Activated CD8-positive, alpha-beta T cell treated with anti-CD3 and anti-CD28 coated beads for 36 hours (primary cell): ENCODE measurements at regions of chr21 and their contacts with region 1.

Region 1: DNA sequence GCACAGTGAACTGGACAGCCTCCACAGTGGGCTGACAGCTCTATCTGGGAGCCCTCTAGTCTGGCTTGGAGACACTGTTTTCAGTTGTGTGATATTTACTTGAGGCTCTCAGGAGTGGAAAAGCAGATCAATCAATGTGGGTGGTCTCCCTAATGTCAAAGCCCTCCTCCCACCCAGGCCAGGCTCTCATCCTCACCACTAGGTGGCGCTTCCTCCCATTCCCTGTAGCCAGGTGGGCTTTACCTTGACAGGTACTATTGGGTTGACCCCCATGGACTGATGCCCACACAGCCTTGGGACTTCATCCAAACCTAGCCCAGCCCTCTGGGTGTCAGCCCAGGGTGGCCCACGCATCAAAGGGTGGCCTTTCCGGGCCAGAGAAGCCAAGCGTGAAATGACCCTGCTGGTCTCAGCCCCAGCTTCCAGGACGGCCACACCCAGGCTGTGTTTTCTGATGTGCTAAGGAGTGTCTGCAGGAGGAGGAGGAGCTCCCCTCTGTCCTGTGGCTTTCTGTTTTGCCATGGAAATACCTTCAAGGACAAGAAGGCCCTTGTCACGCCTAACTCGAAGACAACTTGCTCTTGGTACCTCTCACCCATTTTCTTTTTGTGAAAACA is 54.0 kb downstream of the CLIC6 start:
- DNase-seq: peak; percentile 53
- ATAC-seq: peak; percentile 39
- H3K4me3 Mint-ChIP-seq: no peak overlapping the region
- H3K27ac Mint-ChIP-seq: no peak overlapping the region
- H3K4me1 Mint-ChIP-seq: peaks cover 2% of the 10 kb centered on the region
- H3K27me3 Mint-ChIP-seq: peaks cover 6% of the 10 kb centered on the region
- CTCF ChIP-seq: peak; percentile 93

Region 2: DNA sequence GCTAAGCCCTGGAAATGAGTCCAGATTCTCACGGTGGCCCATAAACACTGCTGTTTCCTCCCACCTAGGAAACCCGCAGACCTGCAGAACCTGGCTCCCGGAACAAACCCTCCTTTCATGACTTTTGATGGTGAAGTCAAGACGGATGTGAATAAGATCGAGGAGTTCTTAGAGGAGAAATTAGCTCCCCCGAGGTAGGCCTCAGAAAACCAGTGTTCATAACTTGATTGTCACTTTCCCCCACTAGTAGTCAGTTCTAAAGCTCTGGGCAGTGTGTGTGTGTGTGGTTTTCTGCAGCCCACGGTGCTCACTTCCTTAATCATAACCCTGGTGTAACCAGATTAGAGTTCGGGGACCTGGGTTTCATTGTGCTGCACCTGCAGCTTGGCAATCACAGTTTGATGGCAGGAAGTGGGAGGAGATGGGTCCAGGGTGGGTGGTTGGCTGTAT is 14.9 kb before region 1 on chr21:
- CTCF ChIA-PET with region 1: interaction called, 33 read pairs
- POLR2A ChIA-PET with region 1: no interaction called
- intact Hi-C with region 1: no loop called
- DNase-seq: peak; percentile 85
- ATAC-seq: peak; percentile 98
- H3K4me3 Mint-ChIP-seq: no peak overlapping the region
- H3K27ac Mint-ChIP-seq: peak overlapping the region; percentile 63
- H3K4me1 Mint-ChIP-seq: peaks cover 26% of the 10 kb centered on the region
- H3K27me3 Mint-ChIP-seq: peaks cover 5% of the 10 kb centered on the region
- CTCF ChIP-seq: no peak

Region 3: DNA sequence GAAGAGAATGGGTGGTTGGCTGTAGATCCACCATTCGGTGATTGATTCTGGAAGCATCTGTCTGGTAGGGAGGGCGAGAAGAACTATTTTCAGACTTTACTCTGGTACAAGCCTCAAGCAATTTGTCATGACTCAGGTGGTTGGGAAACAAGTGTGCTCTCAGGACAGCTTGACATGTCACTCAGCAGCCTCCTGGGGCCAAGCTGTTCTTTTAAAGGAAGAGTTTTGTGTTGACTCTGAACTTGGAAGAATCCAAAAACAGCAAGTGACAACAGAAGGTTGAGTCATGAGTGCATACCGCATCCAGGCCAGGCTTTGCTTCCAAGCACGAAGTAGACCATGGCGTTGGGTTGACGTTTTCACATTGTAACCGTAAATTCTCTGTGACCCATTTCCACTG is 11.9 kb after region 1 on chr21:
- CTCF ChIA-PET with region 1: interaction called, 13 read pairs
- POLR2A ChIA-PET with region 1: interaction called, 3 read pairs
- intact Hi-C with region 1: no loop called
- DNase-seq: no peak
- ATAC-seq: no peak
- H3K4me3 Mint-ChIP-seq: no peak overlapping the region
- H3K27ac Mint-ChIP-seq: no peak overlapping the region
- H3K4me1 Mint-ChIP-seq: no peaks in the 10 kb centered on the region
- H3K27me3 Mint-ChIP-seq: peaks cover 2% of the 10 kb centered on the region
- CTCF ChIP-seq: no peak